Sciatic nerve (tissue), 2 donors: ENCODE measurements at regions of chr19 and their contacts with region 1.

Region 1: GRCh38 chr19:13262450-13262849 is 112.2 kb downstream of the IER2 start:
- DNase-seq: no peak
- ATAC-seq: peak; percentile 57

Region 2: GRCh38 chr19:13195678-13196077 is 66.8 kb before region 1 on chr19:
- intact Hi-C with region 1: loop called (anchors 10 kb)
- DNase-seq: no peak
- ATAC-seq: no peak